HAP-1 (cell line): ENCODE measurements at regions of chr1 and their contacts with region 1.

Region 1: DNA sequence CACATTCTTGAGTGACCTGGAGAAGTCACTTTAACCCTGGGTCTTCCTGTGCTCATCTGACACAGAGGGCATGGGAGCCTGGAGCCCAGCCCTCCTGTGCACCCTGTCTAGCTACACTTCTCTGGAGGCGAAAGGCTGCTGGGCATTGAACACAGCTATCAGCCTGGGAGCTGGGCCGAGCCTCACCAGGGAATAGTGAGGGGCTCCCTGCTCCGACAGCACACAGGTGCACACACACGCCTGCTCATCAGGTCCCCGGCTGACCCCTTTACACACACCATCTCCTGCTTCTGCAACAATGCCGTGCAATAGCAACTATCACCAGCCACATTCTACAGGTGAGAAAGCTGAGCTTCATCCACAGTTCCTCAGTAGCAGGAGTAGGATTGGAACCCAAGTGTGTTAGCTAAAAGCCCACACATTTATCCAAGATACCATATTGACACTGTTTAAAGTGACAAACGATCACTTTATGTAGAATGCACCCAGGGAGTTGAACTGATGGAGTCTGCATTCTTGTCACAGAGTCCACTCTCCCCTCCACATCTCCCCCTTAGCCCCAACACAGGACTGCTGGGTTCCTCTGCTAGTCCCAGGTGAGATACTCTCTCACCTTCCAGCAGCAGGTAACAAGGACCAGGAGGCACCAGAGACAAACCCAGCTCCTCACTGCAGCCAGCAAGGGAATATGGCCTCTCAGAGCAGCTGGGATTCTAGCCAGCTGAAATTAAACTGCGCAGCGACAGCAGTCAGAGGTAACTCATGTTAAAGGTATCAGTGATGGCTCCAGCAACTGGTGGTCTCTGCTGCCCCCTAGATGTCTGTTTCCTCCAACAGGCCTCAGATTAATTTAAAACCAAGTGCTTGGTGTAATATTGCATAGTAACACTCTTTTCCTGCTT is 18.3 kb upstream of the CAPN8 start:
- DNase-seq: peak; percentile 51 to 85
- H3K4me3 ChIP-seq: no peak overlapping the region
- H3K4me1 ChIP-seq: no peaks in the 10 kb centered on the region
- H3K27me3 ChIP-seq: no peaks in the 10 kb centered on the region; the same call in 1 of the 2 replicates

Region 2: GRCh38 chr1:223133824-223134435 is 549.9 kb before region 1 on chr1:
- in situ Hi-C with region 1: loop called (anchors 10 kb)
- DNase-seq: peak; percentile 76 to 88
- H3K4me3 ChIP-seq: peak overlapping the region; percentile 21
- H3K4me1 ChIP-seq: no peaks in the 10 kb centered on the region; the same call in 1 of the 2 replicates
- H3K27me3 ChIP-seq: no peaks in the 10 kb centered on the region; the same call in 1 of the 2 replicates